Activated naive CD4-positive, alpha-beta T cell treated with anti-CD3 and anti-CD28 coated beads for 36 hours (primary cell): ENCODE measurements at regions of chr14 and their contacts with region 1.

Region 1: DNA sequence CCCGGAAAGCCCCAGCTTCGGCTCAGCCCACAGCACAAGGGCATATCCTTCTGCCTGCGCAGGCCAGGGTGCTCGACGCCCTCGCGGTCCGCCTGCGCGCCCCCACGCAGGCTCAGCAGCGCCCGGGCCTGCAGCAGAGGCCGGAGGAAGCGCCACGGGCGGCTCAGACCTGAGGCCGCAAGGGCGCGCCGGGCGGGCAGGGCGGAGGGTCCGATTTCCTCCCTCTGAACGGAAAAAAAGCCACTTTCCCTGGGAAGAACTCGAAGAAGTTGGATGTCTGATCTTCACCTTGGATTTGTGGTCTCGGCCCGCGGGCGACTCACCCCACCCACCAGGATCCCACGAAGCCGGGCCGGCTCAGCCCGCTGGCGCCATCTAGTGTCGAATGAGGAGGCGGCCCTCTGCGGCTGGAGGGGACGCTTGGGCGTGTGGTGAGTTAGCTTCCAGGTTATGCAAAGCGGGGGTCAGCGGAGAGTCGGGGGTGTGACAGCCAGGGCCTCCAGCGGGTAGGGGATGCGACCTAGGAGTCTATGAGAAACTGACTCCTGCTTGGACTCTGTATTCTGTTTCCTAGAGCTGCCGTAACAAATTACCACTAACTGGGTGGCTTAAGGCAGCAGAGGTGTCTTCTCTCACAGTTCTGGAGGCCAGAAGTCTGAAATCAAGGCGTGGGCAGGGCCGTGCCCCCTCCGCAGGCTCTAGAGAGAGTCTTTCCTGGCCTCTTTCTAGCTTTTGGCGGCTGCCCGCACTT is 40.0 kb upstream of the SRSF5 start:
- DNase-seq: peak; percentile 82
- H3K4me3 Mint-ChIP-seq: peak overlapping the region; percentile 38
- H3K27ac Mint-ChIP-seq: no peak overlapping the region
- H3K4me1 Mint-ChIP-seq: peaks cover 12% of the 10 kb centered on the region
- H3K27me3 Mint-ChIP-seq: peaks cover 4% of the 10 kb centered on the region

Region 2: DNA sequence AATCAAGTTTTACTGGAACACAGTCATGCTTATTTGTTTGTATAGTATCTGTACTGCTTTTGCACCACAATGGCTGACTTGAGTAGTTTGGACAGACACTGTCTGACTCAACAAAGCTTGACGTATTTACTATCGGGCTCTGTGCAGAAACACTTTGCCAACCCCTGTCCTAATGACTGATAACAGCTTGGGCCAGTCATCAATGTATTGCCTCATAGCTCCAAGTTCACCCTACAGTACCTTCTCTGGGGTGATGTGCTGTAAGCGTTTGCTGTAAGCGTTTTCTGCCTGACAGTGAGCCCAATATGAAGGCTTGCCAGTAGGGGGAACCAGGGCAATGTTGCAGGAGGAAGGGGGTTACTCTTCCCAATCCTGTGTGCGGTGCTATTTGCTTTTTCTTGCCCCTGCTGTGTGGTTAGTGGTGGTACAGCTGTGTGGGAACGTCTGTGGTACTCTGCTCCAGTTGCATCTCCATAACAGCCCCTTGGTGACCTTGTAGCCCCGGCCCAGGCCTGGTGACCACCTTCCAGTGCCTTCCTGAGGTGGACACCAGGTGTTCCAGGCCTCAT is 146.8 kb before region 1 on chr14:
- CTCF ChIA-PET with region 1: interaction called, 68 read pairs
- intact Hi-C with region 1: loop called (anchors 1 kb)
- DNase-seq: peak; percentile 47
- H3K4me3 Mint-ChIP-seq: no peak overlapping the region
- H3K27ac Mint-ChIP-seq: no peak overlapping the region
- H3K4me1 Mint-ChIP-seq: no peaks in the 10 kb centered on the region
- H3K27me3 Mint-ChIP-seq: peaks cover 8% of the 10 kb centered on the region

Region 3: GRCh38 chr14:69593018-69593677 is 133.8 kb before region 1 on chr14:
- CTCF ChIA-PET with region 1: interaction called, 13 read pairs
- intact Hi-C with region 1: no loop called
- DNase-seq: no peak
- H3K4me3 Mint-ChIP-seq: no peak overlapping the region
- H3K27ac Mint-ChIP-seq: no peak overlapping the region
- H3K4me1 Mint-ChIP-seq: no peaks in the 10 kb centered on the region
- H3K27me3 Mint-ChIP-seq: no peaks in the 10 kb centered on the region

Region 4: GRCh38 chr14:69611201-69612011 is 115.5 kb before region 1 on chr14 and contains the start of gene SUSD6:
- CTCF ChIA-PET with region 1: interaction called, 62 read pairs
- intact Hi-C with region 1: loop called (anchors 2 kb)
- DNase-seq: peak; percentile 88
- H3K4me3 Mint-ChIP-seq: peak within 1 kb of the TSS; percentile 92
- H3K27ac Mint-ChIP-seq: peak within 1 kb of the TSS; percentile 91
- H3K4me1 Mint-ChIP-seq: peaks cover 53% of the 10 kb centered on the region
- H3K27me3 Mint-ChIP-seq: no peaks in the 10 kb centered on the region
- total RNA-seq, gene SUSD6: 66.6 to 69.7 TPM

Region 5: DNA sequence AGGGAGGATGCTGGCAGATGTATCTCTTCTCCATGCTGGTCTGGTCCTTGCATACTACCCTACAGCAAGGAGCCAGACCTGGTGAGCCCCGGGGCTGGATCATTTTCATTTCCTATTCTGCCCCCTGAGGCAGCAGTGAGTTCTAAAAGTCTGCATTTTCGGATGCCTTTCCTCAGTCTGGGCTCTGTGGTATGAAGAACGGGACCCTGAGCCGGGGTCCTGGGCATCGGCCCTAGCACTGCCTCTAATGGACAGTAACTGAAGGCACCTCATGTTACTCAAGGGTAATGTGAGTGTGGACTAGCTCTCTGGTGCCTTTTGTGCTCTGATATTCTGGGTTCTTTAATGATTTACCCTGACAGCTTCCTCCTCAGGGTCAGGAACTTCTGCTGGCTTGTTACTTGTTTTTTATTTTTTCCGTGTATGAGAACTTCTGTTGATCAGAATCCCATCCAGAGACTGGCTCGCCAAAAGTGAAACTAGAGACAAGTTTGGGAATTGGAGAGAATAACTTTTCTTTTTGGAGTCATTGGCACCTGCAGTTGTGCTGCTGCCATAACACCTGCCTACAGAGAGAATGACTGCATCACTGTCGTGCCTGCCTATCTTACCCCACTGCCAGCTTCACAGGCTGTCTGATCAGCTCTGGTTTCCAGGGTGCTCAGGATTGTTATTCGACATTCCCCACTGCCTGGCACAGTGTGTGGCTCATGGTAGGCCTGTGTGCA is 53.2 kb before region 1 on chr14:
- CTCF ChIA-PET with region 1: no interaction called
- intact Hi-C with region 1: no loop called
- DNase-seq: peak; percentile 37
- H3K4me3 Mint-ChIP-seq: peak overlapping the region; percentile 49
- H3K27ac Mint-ChIP-seq: peak overlapping the region; percentile 99
- H3K4me1 Mint-ChIP-seq: peaks cover 94% of the 10 kb centered on the region
- H3K27me3 Mint-ChIP-seq: no peaks in the 10 kb centered on the region

Region 6: GRCh38 chr14:69863083-69863482 is 136.1 kb after region 1 on chr14:
- CTCF ChIA-PET with region 1: no interaction called
- intact Hi-C with region 1: no loop called
- DNase-seq: no peak
- H3K4me3 Mint-ChIP-seq: no peak overlapping the region
- H3K27ac Mint-ChIP-seq: no peak overlapping the region
- H3K4me1 Mint-ChIP-seq: no peaks in the 10 kb centered on the region
- H3K27me3 Mint-ChIP-seq: peaks cover 11% of the 10 kb centered on the region

Region 7: DNA sequence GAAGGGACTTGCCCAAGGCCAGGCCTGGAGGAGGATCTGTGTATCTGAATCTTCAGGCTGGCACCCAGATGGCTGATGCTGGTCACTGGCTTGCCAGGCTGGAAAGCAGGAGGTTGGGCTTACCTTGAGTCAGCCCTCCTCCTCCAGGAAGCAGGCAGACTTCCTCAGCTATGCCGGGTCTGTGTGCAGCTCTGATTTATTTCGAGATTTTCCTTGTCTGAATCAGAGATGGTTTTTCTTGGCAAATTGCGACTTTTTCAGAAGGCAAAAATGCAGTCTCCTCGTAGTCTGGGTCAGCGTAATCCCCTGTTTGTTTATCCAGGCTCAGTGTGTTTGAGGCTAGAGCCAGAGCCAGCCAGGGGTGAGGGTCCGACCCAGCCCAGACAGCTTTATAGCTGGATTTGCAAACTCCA is 201.2 kb after region 1 on chr14:
- CTCF ChIA-PET with region 1: no interaction called
- intact Hi-C with region 1: no loop called
- DNase-seq: no peak
- H3K4me3 Mint-ChIP-seq: no peak overlapping the region
- H3K27ac Mint-ChIP-seq: no peak overlapping the region
- H3K4me1 Mint-ChIP-seq: no peaks in the 10 kb centered on the region
- H3K27me3 Mint-ChIP-seq: peaks cover 5% of the 10 kb centered on the region

Region 8: GRCh38 chr14:70027785-70028428 is 301.0 kb after region 1 on chr14:
- CTCF ChIA-PET with region 1: interaction called, 13 read pairs
- intact Hi-C with region 1: loop called (anchors 1 kb)
- DNase-seq: peak; percentile 78
- H3K4me3 Mint-ChIP-seq: no peak overlapping the region
- H3K27ac Mint-ChIP-seq: no peak overlapping the region
- H3K4me1 Mint-ChIP-seq: no peaks in the 10 kb centered on the region
- H3K27me3 Mint-ChIP-seq: no peaks in the 10 kb centered on the region